ENCODE measurements at regions of chr12 and their contacts with region 1.

Region 1: DNA sequence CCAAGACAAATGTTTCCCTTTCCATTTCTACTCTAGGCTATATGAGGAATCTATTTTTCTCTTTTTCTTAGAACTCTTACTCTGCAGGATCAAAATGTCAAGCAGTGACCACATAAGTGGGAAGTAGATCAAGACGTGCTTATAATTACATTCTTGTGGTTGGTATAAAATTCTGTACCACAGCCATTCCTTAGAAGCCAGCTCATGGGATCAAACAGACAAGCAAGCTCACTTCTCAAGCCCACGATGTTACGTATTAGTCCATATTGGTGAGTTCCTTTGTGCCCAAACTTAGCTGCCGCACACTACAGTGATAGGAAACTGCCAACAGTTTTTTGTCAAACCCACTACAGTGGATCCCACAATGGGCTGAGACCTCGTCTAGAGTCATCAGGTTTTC is 53.4 kb downstream of the IFNG start:
- DNase-seq: no peak
- ATAC-seq: no peak
- H3K4me3 Mint-ChIP-seq: no peak overlapping the region
- H3K27ac Mint-ChIP-seq: no peak overlapping the region
- H3K4me1 Mint-ChIP-seq: no peaks in the 10 kb centered on the region
- H3K27me3 Mint-ChIP-seq: no peaks in the 10 kb centered on the region

Region 2: GRCh38 chr12:68074306-68075027 is 31.7 kb before region 1 on chr12:
- CTCF ChIA-PET with region 1: no interaction called
- POLR2A ChIA-PET with region 1: no interaction called
- intact Hi-C with region 1: loop called in 1 of 2 experiments (anchors 5 kb)
- DNase-seq: no peak
- ATAC-seq: no peak
- H3K4me3 Mint-ChIP-seq: no peak overlapping the region
- H3K27ac Mint-ChIP-seq: no peak overlapping the region
- H3K4me1 Mint-ChIP-seq: peaks cover 6% of the 10 kb centered on the region
- H3K27me3 Mint-ChIP-seq: peaks cover 1% of the 10 kb centered on the region

Region 3: DNA sequence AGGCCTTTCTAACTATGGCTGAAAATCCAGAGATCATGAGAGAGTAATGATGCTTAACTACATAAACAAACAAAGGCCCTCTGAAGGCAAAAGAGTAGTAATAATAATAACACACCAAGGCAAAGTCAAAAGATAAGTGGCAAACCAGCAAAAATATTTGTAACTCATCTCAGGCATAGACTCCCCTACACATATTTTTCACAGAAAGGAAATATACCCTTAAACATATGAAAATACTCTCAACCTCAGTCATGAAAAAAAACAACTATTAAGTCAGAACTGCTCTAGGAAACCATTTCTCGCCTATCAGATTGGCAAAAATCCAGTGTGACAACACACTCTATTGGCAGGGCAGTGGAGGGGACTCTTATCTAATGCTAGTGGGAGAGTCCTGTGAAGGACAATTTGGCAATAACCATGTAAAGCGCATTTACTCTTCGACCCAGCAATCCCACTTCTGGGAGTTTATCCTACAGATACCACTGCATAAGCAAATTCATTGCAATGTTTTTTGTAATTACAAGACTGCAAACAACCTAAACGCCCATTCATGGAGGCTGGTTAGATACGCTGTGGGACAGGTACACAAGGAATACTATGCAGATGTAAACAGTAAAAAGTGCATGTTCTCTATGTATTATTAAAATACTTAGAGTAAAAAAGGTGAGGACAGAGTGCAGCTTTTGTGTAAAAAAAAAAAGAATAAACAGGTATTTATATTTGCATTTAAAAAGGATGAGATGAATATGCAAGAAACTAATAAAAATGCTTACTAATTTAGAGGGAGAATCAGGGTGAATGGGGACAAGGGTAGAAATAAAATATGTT is 173.3 kb after region 1 on chr12:
- CTCF ChIA-PET with region 1: no interaction called
- POLR2A ChIA-PET with region 1: no interaction called
- intact Hi-C with region 1: no loop called
- DNase-seq: no peak
- ATAC-seq: no peak
- H3K4me3 Mint-ChIP-seq: no peak overlapping the region
- H3K27ac Mint-ChIP-seq: no peak overlapping the region
- H3K4me1 Mint-ChIP-seq: peaks cover 33% of the 10 kb centered on the region
- H3K27me3 Mint-ChIP-seq: peaks cover 22% of the 10 kb centered on the region